ENCODE measurements at regions of chr6 and their contacts with region 1.

Region 1: DNA sequence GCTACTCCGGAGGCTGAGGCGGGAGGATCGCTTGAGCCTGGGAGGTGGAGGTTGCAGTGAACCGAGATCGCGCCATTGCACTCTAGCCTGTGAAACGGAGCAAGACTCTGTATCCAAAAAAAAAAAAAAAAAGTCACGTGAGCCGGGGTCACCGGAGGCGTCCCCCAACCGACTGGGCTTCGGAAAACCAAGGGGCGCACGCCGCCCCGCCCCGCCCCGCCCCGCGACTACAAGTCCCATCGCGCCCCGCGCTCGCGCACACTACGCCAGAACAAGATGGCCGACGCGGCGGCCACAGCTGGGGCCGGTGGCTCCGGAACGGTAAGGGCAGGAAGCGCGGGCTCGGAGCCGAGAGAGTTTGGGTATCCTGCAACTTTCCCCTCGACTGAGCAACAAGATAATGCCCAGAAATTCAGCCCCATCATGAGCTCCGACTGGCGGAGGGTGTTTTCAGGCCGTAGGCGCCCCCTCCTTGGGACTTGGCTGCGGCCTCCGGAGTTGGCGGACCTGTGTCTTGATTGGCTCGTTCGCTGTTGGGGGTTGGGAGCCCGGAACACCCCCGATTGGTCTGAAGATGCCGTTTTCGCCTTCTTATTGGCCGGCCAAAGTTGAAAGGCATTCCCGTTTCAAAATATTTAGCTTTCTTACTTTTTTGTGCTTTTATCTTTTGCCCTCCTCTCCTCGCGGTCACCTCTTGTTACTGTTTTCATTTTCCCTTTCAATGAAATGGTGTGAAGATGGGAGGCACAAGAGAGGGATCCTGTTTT is at the start of gene TAF8:
- DNase-seq: peak; percentile 95
- H3K4me3 Mint-ChIP-seq: peak within 1 kb of the TSS; percentile 97
- H3K27ac Mint-ChIP-seq: peak within 1 kb of the TSS; percentile 99
- H3K4me1 Mint-ChIP-seq: peaks cover 67% of the 10 kb centered on the region
- H3K27me3 Mint-ChIP-seq: no peaks in the 10 kb centered on the region
- total RNA-seq, gene TAF8: 57.7 to 58.7 TPM

Region 2: GRCh38 chr6:41735427-41736356 is 314.8 kb before region 1 on chr6 and contains the start of gene TFEB:
- CTCF ChIA-PET with region 1: interaction called, 3 read pairs
- POLR2A ChIA-PET with region 1: no interaction called
- intact Hi-C with region 1: loop called (anchors 1 kb)
- DNase-seq: peak; percentile 95
- H3K4me3 Mint-ChIP-seq: peak within 1 kb of the TSS; percentile 67
- H3K27ac Mint-ChIP-seq: peak within 1 kb of the TSS; percentile 18
- H3K4me1 Mint-ChIP-seq: peaks cover 27% of the 10 kb centered on the region
- H3K27me3 Mint-ChIP-seq: no peaks in the 10 kb centered on the region
- total RNA-seq, gene TFEB: 11.7 to 13.4 TPM

Region 3: DNA sequence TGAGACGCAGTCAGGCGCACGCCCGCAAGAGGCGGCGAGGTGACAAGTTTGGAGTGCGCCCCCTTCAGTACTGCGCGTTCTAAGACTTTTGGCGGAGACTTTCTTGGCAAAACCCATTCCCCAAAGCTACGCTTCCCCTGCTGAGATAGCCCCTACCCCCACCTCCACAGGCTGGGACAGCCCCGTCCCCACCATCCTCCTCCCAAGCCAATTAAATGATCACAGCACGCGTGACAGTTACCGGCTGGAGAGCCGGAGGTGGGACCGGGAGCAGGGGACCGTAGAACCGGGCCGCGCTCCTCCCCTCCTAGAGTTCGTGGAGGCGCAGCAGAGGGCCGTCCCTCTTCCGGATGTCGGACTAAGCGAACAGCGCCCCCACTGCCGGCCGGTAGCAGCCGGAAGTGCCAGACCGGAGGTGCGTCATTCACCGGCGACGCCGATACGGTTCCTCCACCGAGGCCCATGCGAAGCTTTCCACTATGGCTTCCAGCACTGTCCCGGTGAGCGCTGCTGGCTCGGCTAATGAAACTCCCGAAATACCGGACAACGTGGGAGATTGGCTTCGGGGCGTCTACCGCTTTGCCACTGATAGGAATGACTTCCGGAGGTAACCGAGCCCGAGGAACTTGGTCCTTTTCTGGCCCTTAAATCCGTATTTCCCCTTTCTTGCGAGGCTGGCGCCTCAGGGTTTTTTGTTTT is 263.1 kb before region 1 on chr6 and contains the start of gene TOMM6:
- CTCF ChIA-PET with region 1: interaction called, 94 read pairs
- POLR2A ChIA-PET with region 1: interaction called, 6 read pairs
- intact Hi-C with region 1: loop called (anchors 1 kb)
- DNase-seq: peak; percentile 98
- H3K4me3 Mint-ChIP-seq: peak within 1 kb of the TSS; percentile 92
- H3K27ac Mint-ChIP-seq: peak within 1 kb of the TSS; percentile 90
- H3K4me1 Mint-ChIP-seq: peaks cover 20% of the 10 kb centered on the region
- H3K27me3 Mint-ChIP-seq: no peaks in the 10 kb centered on the region
- total RNA-seq, gene TOMM6: 264 to 280 TPM

Region 4: DNA sequence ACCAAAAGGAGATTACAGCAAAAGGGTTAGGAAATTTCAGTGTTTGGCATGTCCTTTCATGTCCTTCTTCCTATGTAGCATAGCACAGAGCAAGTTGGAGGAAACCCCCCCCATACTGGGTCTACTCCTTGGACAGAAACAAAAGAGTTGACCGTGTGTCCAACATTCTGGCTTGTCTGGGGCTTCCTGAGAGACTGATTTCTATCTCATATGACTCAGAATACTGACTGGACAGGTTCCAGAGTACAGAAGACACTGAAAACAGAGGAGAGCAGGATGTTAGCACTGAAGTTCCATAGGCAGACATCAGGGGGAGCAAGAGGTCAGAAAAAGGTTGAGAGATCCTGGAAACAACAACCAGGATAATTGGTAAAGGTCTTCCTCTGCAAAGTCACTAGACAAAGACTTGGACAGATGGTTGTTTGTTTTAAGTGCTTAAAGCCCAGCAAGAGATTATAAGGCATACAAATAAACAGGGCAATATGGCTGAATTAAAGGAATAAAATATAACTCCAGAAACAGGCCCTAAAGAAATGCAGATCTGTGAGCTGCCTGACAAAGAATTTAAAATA is 203.7 kb before region 1 on chr6:
- CTCF ChIA-PET with region 1: interaction called, 134 read pairs
- POLR2A ChIA-PET with region 1: interaction called, 3 read pairs
- intact Hi-C with region 1: no loop called
- DNase-seq: peak; percentile 67
- H3K4me3 Mint-ChIP-seq: no peak overlapping the region
- H3K27ac Mint-ChIP-seq: no peak overlapping the region
- H3K4me1 Mint-ChIP-seq: no peaks in the 10 kb centered on the region
- H3K27me3 Mint-ChIP-seq: no peaks in the 10 kb centered on the region

Region 5: DNA sequence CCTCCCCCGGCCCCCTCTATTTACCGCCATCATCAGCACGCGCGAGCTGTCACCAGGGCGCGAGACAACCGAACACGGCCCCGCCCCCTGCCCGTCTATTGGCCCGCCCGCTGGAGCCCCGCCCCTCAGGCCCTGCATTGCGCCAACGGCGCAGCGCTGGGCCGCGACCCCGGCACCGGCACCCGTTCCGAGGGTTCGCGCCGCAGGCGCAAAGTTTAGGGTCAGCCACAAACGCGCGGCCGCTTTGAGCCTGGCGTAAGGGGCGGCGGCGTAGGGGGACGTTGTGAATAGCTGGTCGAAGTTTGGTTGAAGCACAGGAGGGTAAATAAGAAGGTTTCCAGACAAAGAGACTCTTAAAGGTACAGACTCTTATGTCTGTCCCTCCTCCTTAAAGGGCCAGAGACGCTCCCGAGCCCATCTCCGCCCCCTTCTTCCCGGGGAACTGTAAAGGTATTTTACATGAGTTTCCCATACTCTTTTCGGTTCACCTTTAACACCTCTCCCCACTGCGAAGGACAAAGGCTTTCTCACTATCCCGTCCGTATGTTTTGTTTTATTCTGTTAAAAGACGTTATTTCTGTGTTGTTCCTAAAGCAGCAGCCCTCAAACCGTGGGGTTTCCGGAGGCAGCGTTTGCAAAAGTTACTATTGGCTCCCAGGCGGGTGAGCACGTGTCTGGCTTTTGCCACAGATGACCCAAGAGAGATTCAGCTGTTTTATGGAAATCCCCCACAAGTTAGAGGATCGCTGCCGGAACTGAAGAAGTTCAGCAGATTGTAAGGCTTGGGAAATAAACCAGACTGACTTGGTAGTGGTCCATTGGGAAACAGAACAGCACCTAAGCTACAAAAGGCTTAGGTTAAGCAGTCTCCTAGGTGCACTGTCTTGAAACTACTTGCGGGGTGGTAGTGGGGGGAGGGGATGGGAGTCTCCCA is 154.9 kb before region 1 on chr6 and contains the start of gene USP49:
- CTCF ChIA-PET with region 1: interaction called, 190 read pairs
- POLR2A ChIA-PET with region 1: interaction called, 11 read pairs
- intact Hi-C with region 1: loop called (anchors 1 kb)
- DNase-seq: peak; percentile 94
- H3K4me3 Mint-ChIP-seq: no peak within 1 kb of the TSS
- H3K27ac Mint-ChIP-seq: peak within 1 kb of the TSS; percentile 89
- H3K4me1 Mint-ChIP-seq: peaks cover 9% of the 10 kb centered on the region
- H3K27me3 Mint-ChIP-seq: no peaks in the 10 kb centered on the region
- total RNA-seq, gene USP49: 6.1 to 6.3 TPM

Region 6: DNA sequence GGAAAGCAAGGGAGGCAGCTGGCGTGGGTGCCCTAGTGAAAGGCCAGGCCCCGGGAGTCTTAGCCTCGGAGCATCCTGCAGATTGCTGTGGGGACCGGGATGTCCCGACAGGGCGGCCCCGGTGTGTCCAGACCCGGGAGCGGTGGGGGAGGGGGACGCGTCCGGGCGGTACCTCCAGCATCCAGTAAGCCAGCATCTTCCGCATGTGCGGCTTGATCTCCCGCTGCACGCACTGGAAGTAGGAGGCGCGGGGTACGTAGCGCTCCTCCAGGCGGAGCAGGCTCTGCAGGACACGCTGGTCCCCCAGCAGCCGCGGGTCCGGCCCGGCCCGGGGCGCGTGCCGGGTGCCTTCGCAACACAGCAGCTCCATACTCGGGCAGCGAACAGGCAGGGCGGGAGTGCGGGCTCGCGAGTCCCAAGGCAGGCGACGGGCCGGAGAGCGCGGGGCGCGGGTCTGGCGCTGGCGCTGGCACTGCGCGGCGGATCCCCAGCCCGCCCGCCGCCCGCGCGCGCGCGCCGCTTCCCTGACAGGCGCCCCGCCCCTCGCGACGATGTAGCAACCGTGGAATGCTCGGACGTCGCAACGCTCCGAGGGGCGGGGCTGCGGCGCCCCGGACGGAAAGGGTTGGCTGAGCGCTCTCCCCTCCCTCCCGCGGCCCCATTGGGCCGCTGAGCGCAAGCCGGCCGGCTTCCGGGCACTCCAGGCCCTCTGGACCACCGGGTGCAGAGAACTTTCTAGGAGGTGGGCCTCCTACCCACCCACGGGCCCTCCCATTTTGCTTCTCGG is 109.0 kb before region 1 on chr6 and contains the start of gene CCND3:
- CTCF ChIA-PET with region 1: interaction called, 470 read pairs
- POLR2A ChIA-PET with region 1: interaction called, 177 read pairs
- intact Hi-C with region 1: no loop called
- DNase-seq: peak; percentile 94
- H3K4me3 Mint-ChIP-seq: peak within 1 kb of the TSS; percentile 99
- H3K27ac Mint-ChIP-seq: peak within 1 kb of the TSS; percentile 94
- H3K4me1 Mint-ChIP-seq: peaks cover 50% of the 10 kb centered on the region
- H3K27me3 Mint-ChIP-seq: no peaks in the 10 kb centered on the region
- total RNA-seq, gene CCND3: 570 to 573 TPM

Region 7: GRCh38 chr6:42068173-42068572 is 17.7 kb after region 1 on chr6:
- CTCF ChIA-PET with region 1: no interaction called
- POLR2A ChIA-PET with region 1: no interaction called
- intact Hi-C with region 1: no loop called
- DNase-seq: no peak
- H3K4me3 Mint-ChIP-seq: no peak overlapping the region
- H3K27ac Mint-ChIP-seq: no peak overlapping the region
- H3K4me1 Mint-ChIP-seq: peaks cover under 1% of the 10 kb centered on the region
- H3K27me3 Mint-ChIP-seq: no peaks in the 10 kb centered on the region

Region 8: DNA sequence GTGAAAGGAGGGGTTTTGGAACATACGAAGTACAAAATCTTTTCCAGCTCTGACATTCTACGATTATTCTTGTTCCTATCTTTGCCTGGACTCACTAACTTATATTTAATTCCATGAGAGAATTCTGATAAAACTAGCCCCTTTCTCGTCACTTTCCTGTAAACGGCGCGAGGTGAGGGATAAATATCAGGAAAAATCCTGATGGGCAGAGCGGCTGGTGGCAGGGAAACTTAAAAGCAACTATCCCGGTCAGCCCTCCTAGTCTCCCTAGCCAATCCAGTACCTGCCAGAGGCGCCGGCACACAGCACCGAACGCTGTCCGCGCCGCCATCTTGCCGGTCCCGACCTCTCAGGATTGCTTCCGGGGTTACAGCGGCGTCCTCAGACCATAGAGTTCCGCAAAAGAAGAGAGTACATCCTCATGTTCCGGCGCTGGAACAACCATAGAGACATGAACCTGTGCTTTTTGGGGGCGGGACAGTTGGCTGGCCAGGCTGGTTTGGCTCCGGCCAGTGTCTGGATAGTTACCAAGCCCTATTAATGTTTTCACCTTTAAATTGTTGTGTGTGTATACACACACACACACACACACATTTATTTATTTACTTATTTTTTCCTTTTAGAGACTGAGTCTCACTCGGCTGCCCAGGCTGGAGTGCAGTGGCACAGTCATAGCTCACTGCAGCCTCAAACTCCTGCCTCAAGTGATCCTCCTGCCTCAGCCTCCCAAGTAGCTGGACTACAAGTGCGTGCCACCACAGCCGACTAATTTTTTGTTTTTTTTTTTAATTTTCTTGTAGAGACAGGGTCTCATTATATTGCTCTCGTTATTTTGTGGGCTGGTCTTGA is 167.3 kb after region 1 on chr6 and contains the start of gene MRPS10:
- CTCF ChIA-PET with region 1: interaction called, 11 read pairs
- POLR2A ChIA-PET with region 1: no interaction called
- intact Hi-C with region 1: no loop called
- DNase-seq: peak; percentile 95
- H3K4me3 Mint-ChIP-seq: peak within 1 kb of the TSS; percentile 99
- H3K27ac Mint-ChIP-seq: peak within 1 kb of the TSS; percentile 94
- H3K4me1 Mint-ChIP-seq: peaks cover 39% of the 10 kb centered on the region
- H3K27me3 Mint-ChIP-seq: no peaks in the 10 kb centered on the region
- total RNA-seq, gene MRPS10: 38.6 to 40.3 TPM